CD8-positive, alpha-beta T cell (primary cell): ENCODE measurements at regions of chr1 and their contacts with region 1.

Region 1: DNA sequence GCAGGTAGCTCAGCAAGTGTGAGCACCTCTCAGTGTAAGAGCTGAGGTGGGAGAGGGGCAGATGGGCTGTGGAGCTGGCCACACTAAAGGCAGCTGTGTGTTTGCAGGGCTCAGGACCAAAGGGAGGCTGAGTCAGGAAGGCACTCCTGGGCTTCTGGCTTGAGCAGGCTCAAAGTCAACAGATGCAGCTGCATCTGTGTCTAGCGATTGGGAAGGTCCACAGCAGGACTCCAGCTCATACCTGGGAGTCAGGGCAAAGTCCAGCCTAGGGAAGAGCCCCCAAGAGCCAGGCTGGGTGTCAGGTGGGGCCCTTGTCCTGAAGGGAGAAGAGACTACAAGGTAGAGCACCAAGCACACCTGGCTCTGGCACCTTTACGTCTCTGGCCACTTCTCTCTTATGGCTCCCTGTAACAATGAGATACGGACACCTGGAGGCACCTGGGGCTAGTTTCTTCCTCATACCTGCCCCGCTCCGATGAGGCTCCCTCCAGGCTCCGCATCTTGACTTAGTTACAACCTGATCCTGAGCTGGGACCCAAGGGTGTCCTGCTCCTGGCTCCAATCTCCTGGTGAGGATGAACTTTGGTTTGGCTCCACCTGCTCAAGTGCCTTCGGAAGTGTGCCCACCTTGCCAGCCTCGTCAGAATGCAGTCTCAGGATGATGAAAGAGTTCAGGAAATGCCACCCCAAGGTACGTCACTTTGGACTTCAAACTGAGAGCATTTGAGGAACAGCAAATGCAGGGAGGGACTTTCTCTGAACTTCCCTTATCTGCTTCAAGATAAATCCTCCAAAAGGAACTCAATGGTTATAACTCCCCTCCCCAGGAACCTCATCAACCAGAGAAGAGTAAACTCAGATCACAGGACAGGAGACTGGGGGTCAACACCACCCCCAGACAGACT is 21.5 kb upstream of the SLC2A1 start:
- DNase-seq: no peak
- ATAC-seq: no peak
- H3K4me3 ChIP-seq: no peak overlapping the region
- H3K4me3 Mint-ChIP-seq: no peak overlapping the region
- H3K27ac ChIP-seq: no peak overlapping the region
- H3K27ac Mint-ChIP-seq: no peak overlapping the region
- H3K4me1 ChIP-seq: no peaks in the 10 kb centered on the region
- H3K4me1 Mint-ChIP-seq: no peaks in the 10 kb centered on the region
- H3K27me3 ChIP-seq: no peaks in the 10 kb centered on the region
- H3K27me3 Mint-ChIP-seq: no peaks in the 10 kb centered on the region
- CTCF ChIP-seq: no peak

Region 2: DNA sequence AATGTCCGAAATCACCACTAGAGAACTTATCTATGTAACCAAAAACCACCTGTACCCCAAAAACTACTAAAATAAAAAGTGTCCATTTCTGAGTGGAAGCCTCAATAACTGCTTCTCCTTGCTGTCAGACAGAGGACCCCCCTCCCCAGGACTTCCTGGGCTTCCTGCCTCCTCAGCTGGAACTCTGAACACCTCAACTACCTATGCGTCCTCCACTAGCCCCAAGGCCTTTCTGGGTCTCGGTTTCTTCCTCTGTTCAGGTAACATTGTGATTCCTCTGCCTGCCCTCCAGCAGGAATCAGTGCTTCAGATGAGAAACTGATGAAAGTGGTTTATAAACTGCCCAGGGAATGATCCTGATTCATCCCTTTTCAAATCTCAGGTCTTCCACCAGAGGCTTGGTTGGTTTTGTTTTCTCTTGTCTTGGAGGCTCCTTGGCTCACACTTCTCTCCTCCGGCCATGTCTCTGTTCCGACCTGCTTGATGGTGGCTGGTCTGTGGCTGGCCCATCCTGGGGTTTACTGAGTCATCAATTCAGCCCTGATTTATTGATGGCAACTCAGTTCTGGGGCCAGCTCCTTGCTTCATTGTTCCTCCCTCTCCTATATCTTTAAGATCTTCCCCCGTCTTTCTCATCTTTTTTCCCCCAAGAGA is 35.0 kb after region 1 on chr1:
- CTCF ChIA-PET with region 1: no interaction called
- POLR2A ChIA-PET with region 1: no interaction called
- intact Hi-C with region 1: loop called in 1 of 2 experiments (anchors 5 kb)
- DNase-seq: no peak
- ATAC-seq: no peak
- H3K4me3 ChIP-seq: no peak overlapping the region
- H3K4me3 Mint-ChIP-seq: no peak overlapping the region
- H3K27ac ChIP-seq: no peak overlapping the region
- H3K27ac Mint-ChIP-seq: no peak overlapping the region
- H3K4me1 ChIP-seq: no peaks in the 10 kb centered on the region
- H3K4me1 Mint-ChIP-seq: no peaks in the 10 kb centered on the region
- H3K27me3 ChIP-seq: no peaks in the 10 kb centered on the region
- H3K27me3 Mint-ChIP-seq: no peaks in the 10 kb centered on the region
- CTCF ChIP-seq: no peak